SK-N-SH (cell line): ENCODE measurements at regions of chr19 and their contacts with region 1.

Region 1: DNA sequence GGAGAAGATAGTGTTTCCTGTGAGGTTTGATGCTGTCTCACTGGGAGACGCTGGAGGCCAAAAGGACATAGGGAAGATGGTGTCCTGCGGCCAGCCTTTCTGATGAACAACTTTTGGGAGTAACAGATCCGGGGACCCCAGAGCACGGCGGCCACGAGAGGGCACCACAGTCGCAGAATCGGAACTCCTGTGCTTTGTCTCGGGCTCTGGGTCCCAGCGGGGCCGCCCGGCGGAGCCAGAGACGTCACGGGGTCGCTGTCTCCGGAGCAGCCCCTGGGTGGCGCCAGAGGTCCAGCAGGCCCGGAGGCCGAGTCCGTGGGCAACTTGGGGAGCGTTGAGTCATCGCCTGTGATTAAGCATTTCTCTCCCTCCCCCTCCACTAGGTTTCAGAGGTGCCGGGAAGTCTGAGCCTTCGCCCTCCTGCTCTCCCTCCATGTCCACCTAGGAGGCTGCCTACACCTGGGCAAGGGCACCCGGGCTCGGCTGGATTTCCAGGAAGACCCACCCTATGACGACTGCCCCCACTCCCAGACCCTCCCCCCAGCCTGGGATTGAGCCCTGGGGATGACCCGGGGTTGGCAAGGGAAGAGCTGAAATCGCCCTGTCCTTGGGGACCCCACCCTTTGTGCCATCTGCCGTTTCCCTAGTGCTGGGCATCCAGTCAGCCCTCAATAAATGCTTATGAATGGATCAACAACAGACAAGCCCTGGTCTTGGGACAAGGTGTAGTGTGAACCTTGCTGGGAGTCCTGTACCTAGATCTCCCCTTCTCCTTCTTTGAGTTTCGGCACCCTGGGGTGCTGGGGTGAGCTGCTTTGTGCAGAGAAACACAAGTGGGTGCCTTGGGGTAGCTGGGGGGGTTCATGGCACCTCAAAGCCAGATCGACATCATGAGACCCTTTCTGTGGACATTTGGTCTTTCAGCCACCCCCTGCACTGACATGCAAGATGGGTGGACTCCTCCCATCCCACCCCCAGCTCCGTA is 3.4 kb downstream of the NANOS3 start:
- DNase-seq: peak; percentile 98
- H3K4me3 ChIP-seq: peak overlapping the region; percentile 30 to 48; a peak in 3 of 4 replicates
- H3K27ac ChIP-seq: peak overlapping the region; percentile 56 to 58; a peak in 3 of 4 replicates
- H3K4me1 ChIP-seq: peaks cover 7 to 22% of the 10 kb centered on the region in 2 experiments; a peak in 3 of 4 replicates
- H3K27me3 ChIP-seq: no peaks in the 10 kb centered on the region
- CTCF ChIP-seq: peak; percentile 98
- EP300 ChIP-seq: no peak; a peak in 1 of 4 replicates
- RAD21 ChIP-seq: peak; percentile 97

Region 2: DNA sequence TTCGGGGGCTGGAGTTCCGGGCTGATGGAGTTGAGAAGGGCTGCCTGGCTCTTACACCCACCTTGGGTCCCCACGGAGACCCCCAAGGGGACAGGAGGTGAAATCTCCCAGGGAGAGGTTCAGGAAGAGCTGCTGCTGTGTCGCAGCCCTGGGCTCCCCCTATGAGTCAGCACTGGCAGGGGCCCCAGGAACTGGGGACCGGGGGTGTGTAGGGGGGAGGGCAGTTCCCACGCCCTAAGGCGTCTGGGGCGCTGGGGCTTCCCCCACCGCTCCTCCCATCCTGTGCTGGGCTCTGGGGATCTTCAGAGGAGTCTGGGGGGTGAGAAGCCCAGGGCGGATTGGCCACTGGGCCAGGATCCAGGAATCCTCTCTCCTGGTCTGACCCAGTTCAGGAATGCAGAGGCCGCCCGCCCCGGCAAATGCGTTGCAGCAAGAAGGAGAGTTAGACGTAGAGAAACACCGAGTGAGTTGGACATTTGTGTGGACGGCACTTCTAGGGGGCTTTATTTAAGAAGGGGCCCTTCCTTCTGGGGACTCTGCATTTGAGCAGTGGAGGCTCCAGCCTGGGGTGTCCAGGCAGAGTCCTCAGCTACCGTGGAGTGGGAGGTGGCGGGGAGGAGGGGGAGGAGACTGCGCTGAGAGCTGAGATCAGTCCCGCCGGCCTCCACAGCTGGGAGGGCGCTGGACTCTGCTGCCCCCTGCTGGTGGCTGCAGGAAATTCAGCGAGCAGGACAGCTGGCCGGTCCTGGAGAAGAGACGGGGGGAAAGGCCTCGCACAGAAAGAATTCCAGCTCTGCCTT is 18.4 kb before region 1 on chr19:
- CTCF ChIA-PET with region 1: interaction called, 11 read pairs
- POLR2A ChIA-PET with region 1: no interaction called
- DNase-seq: peak; percentile 94
- H3K4me3 ChIP-seq: peak overlapping the region; percentile 39 to 61
- H3K27ac ChIP-seq: peak overlapping the region; percentile 82 to 98
- H3K4me1 ChIP-seq: peaks cover 9 to 20% of the 10 kb centered on the region in 2 experiments; a peak in 3 of 4 replicates
- H3K27me3 ChIP-seq: no peaks in the 10 kb centered on the region
- CTCF ChIP-seq: peak; percentile 91
- EP300 ChIP-seq: peak; percentile 14 to 69; a peak in 2 of 4 replicates
- RAD21 ChIP-seq: peak; percentile 95

Region 3: GRCh38 chr19:13902993-13903614 is 22.8 kb after region 1 on chr19:
- CTCF ChIA-PET with region 1: interaction called, 41 read pairs
- POLR2A ChIA-PET with region 1: no interaction called
- DNase-seq: peak; percentile 59
- H3K4me3 ChIP-seq: no peak overlapping the region
- H3K27ac ChIP-seq: no peak overlapping the region
- H3K4me1 ChIP-seq: peaks cover 0 to 9% of the 10 kb centered on the region in 2 experiments; a peak in 1 of 4 replicates
- H3K27me3 ChIP-seq: no peaks in the 10 kb centered on the region
- CTCF ChIP-seq: peak; percentile 59
- EP300 ChIP-seq: no peak
- RAD21 ChIP-seq: peak; percentile 31

Region 4: DNA sequence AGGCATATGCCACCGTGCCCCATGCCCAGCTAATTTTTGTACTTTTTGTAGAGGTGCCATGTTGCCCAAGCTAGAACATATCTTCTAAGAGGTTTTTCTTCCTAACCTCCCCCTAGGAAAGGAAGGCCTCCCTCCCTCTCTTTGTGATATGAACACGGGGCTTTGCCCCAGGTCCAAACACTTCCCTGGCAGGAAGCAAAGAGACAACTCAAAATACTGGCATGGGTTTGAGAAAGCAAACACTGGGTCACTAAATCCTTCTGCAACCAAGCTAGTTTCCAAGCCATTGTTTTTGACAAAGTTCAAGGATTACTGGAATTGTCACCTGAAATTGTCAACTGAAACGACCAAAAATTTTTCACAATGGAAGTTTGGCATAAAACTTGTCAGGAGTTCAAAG is 34.4 kb after region 1 on chr19:
- CTCF ChIA-PET with region 1: no interaction called
- POLR2A ChIA-PET with region 1: no interaction called
- DNase-seq: no peak
- H3K4me3 ChIP-seq: no peak overlapping the region
- H3K27ac ChIP-seq: no peak overlapping the region
- H3K4me1 ChIP-seq: no peaks in the 10 kb centered on the region
- H3K27me3 ChIP-seq: no peaks in the 10 kb centered on the region
- CTCF ChIP-seq: no peak
- EP300 ChIP-seq: no peak
- RAD21 ChIP-seq: no peak

Region 5: DNA sequence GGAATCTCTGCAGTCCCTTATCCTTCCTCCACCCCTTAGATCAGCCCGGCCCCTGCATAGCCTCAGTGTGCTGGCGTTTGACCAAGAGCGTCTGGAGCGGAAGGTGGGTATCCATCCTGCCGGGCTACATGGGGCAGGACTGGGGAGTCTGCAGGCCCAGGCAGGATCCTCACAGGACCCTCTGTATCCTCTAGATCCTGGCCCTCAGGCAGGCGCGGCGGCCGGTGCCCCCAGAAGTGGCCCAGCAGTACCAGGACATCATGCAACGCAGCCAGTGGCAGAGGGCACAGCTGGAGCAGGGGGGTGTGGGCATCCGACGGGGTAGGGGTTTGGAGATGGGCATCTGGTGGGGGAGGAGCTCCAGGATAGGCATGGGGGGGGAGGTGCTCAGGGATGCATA is 49.0 kb after region 1 on chr19:
- CTCF ChIA-PET with region 1: no interaction called
- POLR2A ChIA-PET with region 1: no interaction called
- DNase-seq: peak; percentile 76
- H3K4me3 ChIP-seq: no peak overlapping the region
- H3K27ac ChIP-seq: peak overlapping the region in 1 of 2 experiments; percentile 8; a peak in 1 of 4 replicates
- H3K4me1 ChIP-seq: peaks cover 0 to 7% of the 10 kb centered on the region in 2 experiments; a peak in 1 of 4 replicates
- H3K27me3 ChIP-seq: no peaks in the 10 kb centered on the region
- CTCF ChIP-seq: no peak
- EP300 ChIP-seq: no peak
- RAD21 ChIP-seq: no peak

Region 6: DNA sequence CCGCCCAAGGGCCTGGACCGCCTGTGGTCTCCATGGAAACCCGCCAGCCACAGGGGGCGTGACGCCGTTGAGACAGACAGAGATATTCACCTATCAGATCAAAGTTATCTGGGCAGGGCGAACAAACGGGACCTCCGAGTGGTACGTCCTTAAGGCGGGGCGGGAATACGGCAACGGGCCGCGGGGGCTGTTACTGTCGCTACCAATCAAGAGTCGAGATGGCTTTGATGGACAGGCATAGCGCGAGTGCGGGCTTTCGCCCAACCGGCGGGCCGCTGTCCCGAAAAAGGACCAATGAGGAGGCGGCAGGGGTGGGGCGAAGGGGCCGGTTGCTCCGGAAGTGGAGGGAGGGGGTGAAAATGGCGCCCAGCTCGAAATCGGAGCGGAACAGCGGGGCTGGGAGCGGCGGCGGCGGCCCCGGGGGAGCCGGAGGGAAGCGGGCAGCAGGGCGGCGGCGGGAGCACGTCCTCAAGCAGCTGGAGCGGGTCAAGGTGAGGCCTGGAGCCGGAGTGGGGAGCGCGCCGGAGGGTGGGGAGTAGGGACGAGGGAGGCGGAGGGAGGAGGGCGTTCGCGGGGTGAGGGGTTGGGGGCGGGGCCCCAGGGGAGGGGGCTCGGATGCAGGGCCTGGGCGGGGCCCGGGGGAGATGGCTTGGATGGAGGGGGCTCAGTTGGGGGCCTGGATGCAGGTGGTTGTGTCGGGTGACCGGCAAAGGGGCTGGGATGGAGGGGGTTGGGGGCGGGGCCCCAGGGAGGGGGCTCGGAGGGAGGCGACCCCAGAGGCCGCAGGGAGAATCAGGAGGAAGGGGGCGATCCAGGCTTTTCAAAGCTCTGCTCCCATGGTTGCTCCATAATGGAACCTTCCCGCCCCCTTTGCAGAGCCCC is 72.0 kb after region 1 on chr19 and contains the start of gene DCAF15:
- CTCF ChIA-PET with region 1: interaction called, 17 read pairs
- POLR2A ChIA-PET with region 1: no interaction called
- DNase-seq: peak; percentile 99
- H3K4me3 ChIP-seq: peak within 1 kb of the TSS; percentile 61 to 93
- H3K27ac ChIP-seq: peak within 1 kb of the TSS; percentile 54 to 86
- H3K4me1 ChIP-seq: peaks cover 0 to 11% of the 10 kb centered on the region in 2 experiments; a peak in 1 of 4 replicates
- H3K27me3 ChIP-seq: no peaks in the 10 kb centered on the region
- CTCF ChIP-seq: no peak
- EP300 ChIP-seq: no peak
- RAD21 ChIP-seq: no peak; the same call in 1 of the 2 replicates
- polyA plus RNA-seq, gene DCAF15: 36.7 and 55.6 TPM in 2 replicates

Region 7: DNA sequence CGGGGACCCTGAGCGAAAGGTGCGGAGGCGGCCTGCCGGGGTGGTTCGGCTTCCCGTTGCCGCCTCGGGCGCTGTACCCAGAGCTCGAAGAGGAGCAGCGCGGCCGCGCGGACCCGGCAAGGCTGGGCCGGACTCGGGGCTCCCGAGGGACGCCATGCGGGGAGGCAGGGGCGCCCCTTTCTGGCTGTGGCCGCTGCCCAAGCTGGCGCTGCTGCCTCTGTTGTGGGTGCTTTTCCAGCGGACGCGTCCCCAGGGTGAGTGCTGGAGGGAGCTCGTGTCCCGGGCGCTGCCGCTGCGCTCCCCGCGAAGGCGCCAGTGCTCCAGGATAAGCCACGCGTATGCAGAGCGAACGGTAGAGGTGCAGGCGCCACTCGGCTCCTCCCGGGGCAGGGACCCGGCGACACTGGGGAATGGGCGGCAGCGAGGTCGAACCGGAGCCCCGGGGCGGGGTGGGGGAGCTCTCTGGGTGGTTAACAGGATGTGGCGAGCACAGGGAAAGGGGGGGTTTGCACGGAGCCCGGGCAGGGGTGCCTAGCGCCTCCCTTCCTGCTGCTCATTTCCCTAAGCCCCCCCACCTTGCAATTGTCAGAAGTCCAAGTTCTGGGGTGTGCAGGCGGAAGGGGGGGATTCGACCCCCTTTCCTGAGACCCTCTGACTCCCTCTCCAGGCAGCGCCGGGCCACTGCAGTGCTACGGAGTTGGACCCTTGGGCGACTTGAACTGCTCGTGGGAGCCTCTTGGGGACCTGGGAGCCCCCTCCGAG is 151.5 kb after region 1 on chr19 and contains the start of gene IL27RA:
- CTCF ChIA-PET with region 1: interaction called, 31 read pairs
- POLR2A ChIA-PET with region 1: no interaction called
- DNase-seq: peak; percentile 87
- H3K4me3 ChIP-seq: peak within 1 kb of the TSS; percentile 60 to 80
- H3K27ac ChIP-seq: peak within 1 kb of the TSS in 1 of 2 experiments; percentile 40; a peak in 3 of 4 replicates
- H3K4me1 ChIP-seq: peaks cover 0 to 3% of the 10 kb centered on the region in 2 experiments; a peak in 1 of 4 replicates
- H3K27me3 ChIP-seq: no peaks in the 10 kb centered on the region
- CTCF ChIP-seq: peak; percentile 70
- EP300 ChIP-seq: no peak
- RAD21 ChIP-seq: peak; percentile 61
- polyA plus RNA-seq, gene IL27RA: 9.3 TPM in 2 replicates

Region 8: GRCh38 chr19:14059093-14059480 is 178.7 kb after region 1 on chr19:
- CTCF ChIA-PET with region 1: interaction called, 36 read pairs
- POLR2A ChIA-PET with region 1: no interaction called
- DNase-seq: peak; percentile 66
- H3K4me3 ChIP-seq: peak overlapping the region in 1 of 2 experiments; percentile 64; a peak in 1 of 4 replicates
- H3K27ac ChIP-seq: no peak overlapping the region
- H3K4me1 ChIP-seq: peaks cover 6 to 10% of the 10 kb centered on the region in 2 experiments; a peak in 2 of 4 replicates
- H3K27me3 ChIP-seq: no peaks in the 10 kb centered on the region
- CTCF ChIP-seq: peak; percentile 76
- EP300 ChIP-seq: no peak
- RAD21 ChIP-seq: no peak

Region 9: DNA sequence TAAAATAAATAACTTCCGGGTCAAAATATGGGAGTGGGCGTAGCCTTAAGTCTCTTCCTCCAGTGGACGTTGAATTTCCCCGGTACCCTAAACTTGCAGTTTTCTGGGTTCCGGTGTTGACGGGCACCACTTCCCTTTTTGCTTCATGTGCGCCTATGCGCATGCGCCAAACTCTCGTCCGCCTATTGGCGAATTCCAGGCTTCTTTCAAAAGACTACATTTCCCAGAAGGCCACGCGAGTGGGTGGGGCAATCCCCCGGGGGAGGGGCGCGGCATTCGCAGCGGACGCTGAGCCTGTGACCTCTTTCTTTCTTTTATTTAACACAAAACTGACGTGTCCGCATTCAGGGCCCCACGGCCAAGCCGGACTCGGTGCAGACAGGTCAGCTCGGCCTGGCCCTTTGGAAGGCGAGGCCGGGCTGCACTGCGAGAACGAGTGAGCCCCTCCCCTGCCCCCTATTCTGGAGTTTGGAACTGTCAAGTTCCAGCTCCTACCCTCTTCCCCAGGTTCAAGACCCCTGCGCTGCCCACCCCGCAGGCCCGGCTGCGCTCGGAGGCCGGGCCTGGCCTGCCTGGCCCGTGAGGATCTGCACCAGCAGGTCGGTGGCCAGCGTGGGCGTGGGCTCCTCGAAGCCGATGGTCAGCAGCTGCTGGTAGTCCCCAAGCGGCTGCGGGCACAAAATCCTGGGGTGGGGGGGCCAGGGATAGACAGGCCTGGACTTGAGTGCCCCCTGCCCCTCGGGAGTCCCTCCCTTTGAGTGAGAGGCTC is 201.2 kb after region 1 on chr19:
- CTCF ChIA-PET with region 1: interaction called, 33 read pairs
- POLR2A ChIA-PET with region 1: interaction called, 3 read pairs
- DNase-seq: peak; percentile 95
- H3K4me3 ChIP-seq: peak overlapping the region; percentile 68 to 95
- H3K27ac ChIP-seq: peak overlapping the region; percentile 51 to 70; a peak in 3 of 4 replicates
- H3K4me1 ChIP-seq: peaks cover 3 to 12% of the 10 kb centered on the region in 2 experiments; a peak in 2 of 4 replicates
- H3K27me3 ChIP-seq: no peaks in the 10 kb centered on the region
- CTCF ChIP-seq: 0 out of 2 replicates have a peak, but pooled peaks have one; percentile 7
- EP300 ChIP-seq: no peak
- RAD21 ChIP-seq: no peak

Region 10: DNA sequence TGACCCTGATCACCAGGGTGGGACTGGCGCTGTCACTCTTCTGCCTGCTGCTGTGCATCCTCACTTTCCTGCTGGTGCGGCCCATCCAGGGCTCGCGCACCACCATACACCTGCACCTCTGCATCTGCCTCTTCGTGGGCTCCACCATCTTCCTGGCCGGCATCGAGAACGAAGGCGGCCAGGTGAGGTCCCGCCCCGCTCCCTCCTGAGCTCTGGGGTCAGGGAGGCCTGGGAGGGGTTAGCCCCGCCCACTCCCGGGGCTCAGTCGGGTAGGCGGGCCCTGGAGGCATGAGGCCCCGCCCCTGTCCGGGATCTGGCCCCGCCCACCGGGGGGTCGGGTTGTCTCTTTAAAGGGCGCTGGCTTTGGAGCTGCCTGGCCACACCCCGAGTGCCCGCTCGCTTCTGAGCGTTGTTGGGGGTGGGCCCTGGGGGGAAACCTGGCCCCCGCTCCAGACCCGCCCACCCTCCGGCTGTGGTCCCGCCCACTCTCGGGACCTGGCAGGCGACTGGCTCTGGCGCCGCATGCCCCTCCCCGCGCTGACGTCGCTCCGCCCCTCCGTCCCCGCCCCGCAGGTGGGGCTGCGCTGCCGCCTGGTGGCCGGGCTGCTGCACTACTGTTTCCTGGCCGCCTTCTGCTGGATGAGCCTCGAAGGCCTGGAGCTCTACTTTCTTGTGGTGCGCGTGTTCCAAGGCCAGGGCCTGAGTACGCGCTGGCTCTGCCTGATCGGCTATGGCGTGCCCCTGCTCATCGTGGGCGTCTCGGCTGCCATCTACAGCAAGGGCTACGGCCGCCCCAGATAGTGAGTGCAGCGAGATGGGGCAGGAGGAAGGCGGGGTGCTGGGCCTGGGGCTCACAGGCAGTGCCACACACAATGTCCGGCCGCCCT is 525.6 kb after region 1 on chr19:
- CTCF ChIA-PET with region 1: no interaction called
- POLR2A ChIA-PET with region 1: no interaction called
- DNase-seq: peak; percentile 100
- H3K4me3 ChIP-seq: peak overlapping the region in 1 of 2 experiments; percentile 14; a peak in 2 of 4 replicates
- H3K27ac ChIP-seq: peak overlapping the region; percentile 24 to 66; a peak in 3 of 4 replicates
- H3K4me1 ChIP-seq: peaks cover 0 to 7% of the 10 kb centered on the region in 2 experiments; a peak in 1 of 4 replicates
- H3K27me3 ChIP-seq: no peaks in the 10 kb centered on the region
- CTCF ChIP-seq: peak; percentile 66
- EP300 ChIP-seq: no peak
- RAD21 ChIP-seq: peak; percentile 82